ENCODE measurements at regions of chr9 and their contacts with region 1.

Region 1: GRCh38 chr9:37350486-37351190 is 71.9 kb upstream of the GRHPR start:
- DNase-seq: no peak
- ATAC-seq: no peak
- H3K4me3 Mint-ChIP-seq: no peak overlapping the region
- H3K27ac Mint-ChIP-seq: peak overlapping the region; percentile 19
- H3K4me1 Mint-ChIP-seq: peaks cover 26% of the 10 kb centered on the region
- H3K27me3 Mint-ChIP-seq: no peaks in the 10 kb centered on the region
- CTCF ChIP-seq: no peak

Region 2: GRCh38 chr9:37337301-37337890 is 13.2 kb before region 1 on chr9:
- CTCF ChIA-PET with region 1: no interaction called
- POLR2A ChIA-PET with region 1: interaction called, 11 read pairs
- intact Hi-C with region 1: loop called (anchors 2 kb)
- DNase-seq: no peak
- ATAC-seq: peak; percentile 50
- H3K4me3 Mint-ChIP-seq: peak overlapping the region; percentile 71
- H3K27ac Mint-ChIP-seq: peak overlapping the region; percentile 94
- H3K4me1 Mint-ChIP-seq: peaks cover 73% of the 10 kb centered on the region
- H3K27me3 Mint-ChIP-seq: no peaks in the 10 kb centered on the region
- CTCF ChIP-seq: no peak

Region 3: GRCh38 chr9:37676411-37676830 is 325.8 kb after region 1 on chr9:
- CTCF ChIA-PET with region 1: no interaction called
- POLR2A ChIA-PET with region 1: no interaction called
- intact Hi-C with region 1: no loop called
- DNase-seq: no peak
- ATAC-seq: no peak
- H3K4me3 Mint-ChIP-seq: no peak overlapping the region
- H3K27ac Mint-ChIP-seq: no peak overlapping the region
- H3K4me1 Mint-ChIP-seq: no peaks in the 10 kb centered on the region
- H3K27me3 Mint-ChIP-seq: peaks cover 20% of the 10 kb centered on the region
- CTCF ChIP-seq: no peak